CD4-positive, alpha-beta T cell (primary cell): ENCODE measurements at regions of chr11 and their contacts with region 1.

Region 1: GRCh38 chr11:28090052-28090749 is 17.8 kb downstream of the KIF18A start:
- DNase-seq: no peak
- ATAC-seq: no peak
- H3K4me3 ChIP-seq: no peak overlapping the region
- H3K4me3 Mint-ChIP-seq: no peak overlapping the region
- H3K27ac ChIP-seq: no peak overlapping the region
- H3K27ac Mint-ChIP-seq: no peak overlapping the region
- H3K4me1 ChIP-seq: no peaks in the 10 kb centered on the region
- H3K4me1 Mint-ChIP-seq: no peaks in the 10 kb centered on the region
- H3K27me3 ChIP-seq: no peaks in the 10 kb centered on the region
- H3K27me3 Mint-ChIP-seq: no peaks in the 10 kb centered on the region
- CTCF ChIP-seq: no peak

Region 2: DNA sequence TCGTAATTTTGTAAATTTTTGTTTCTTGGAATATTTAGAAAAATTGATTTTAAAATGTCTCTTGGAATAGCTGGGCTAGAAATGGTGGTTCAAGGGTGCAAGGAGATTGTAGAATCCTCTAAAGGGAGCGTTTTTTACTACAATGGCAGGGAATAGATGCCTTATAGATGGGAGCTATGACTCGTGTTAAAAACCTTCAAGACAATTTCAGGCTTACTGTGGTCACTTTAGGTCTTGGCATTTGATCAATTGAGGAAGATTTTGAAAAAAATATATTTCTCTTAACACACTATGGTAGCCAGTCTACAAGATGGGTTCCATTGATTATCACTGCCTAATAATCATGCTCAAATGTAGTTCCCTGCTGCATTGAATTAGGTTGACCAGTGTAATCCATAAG is 42.9 kb after region 1 on chr11:
- CTCF ChIA-PET with region 1: no interaction called
- POLR2A ChIA-PET with region 1: no interaction called
- intact Hi-C with region 1: loop called in 1 of 2 experiments (anchors 5 kb)
- DNase-seq: no peak
- ATAC-seq: no peak
- H3K4me3 ChIP-seq: no peak overlapping the region
- H3K4me3 Mint-ChIP-seq: no peak overlapping the region
- H3K27ac ChIP-seq: no peak overlapping the region
- H3K27ac Mint-ChIP-seq: no peak overlapping the region
- H3K4me1 ChIP-seq: no peaks in the 10 kb centered on the region
- H3K4me1 Mint-ChIP-seq: no peaks in the 10 kb centered on the region
- H3K27me3 ChIP-seq: no peaks in the 10 kb centered on the region
- H3K27me3 Mint-ChIP-seq: no peaks in the 10 kb centered on the region
- CTCF ChIP-seq: no peak